ENCODE measurements at regions of chr16 and their contacts with region 1.

Region 1: GRCh38 chr16:1261131-1261892 is 5.4 kb downstream of the TPSD1 start:
- DNase-seq: no peak
- ATAC-seq: no peak
- H3K4me3 ChIP-seq: no peak overlapping the region
- H3K27ac ChIP-seq: no peak overlapping the region
- H3K4me1 ChIP-seq: no peaks in the 10 kb centered on the region
- H3K27me3 ChIP-seq: no peaks in the 10 kb centered on the region

Region 2: GRCh38 chr16:1216296-1216619 is 45.1 kb before region 1 on chr16:
- intact Hi-C with region 1: loop called in 1 of 2 experiments (anchors 10 kb)
- DNase-seq: no peak
- ATAC-seq: no peak
- H3K4me3 ChIP-seq: no peak overlapping the region
- H3K27ac ChIP-seq: no peak overlapping the region
- H3K4me1 ChIP-seq: no peaks in the 10 kb centered on the region
- H3K27me3 ChIP-seq: no peaks in the 10 kb centered on the region

Region 3: DNA sequence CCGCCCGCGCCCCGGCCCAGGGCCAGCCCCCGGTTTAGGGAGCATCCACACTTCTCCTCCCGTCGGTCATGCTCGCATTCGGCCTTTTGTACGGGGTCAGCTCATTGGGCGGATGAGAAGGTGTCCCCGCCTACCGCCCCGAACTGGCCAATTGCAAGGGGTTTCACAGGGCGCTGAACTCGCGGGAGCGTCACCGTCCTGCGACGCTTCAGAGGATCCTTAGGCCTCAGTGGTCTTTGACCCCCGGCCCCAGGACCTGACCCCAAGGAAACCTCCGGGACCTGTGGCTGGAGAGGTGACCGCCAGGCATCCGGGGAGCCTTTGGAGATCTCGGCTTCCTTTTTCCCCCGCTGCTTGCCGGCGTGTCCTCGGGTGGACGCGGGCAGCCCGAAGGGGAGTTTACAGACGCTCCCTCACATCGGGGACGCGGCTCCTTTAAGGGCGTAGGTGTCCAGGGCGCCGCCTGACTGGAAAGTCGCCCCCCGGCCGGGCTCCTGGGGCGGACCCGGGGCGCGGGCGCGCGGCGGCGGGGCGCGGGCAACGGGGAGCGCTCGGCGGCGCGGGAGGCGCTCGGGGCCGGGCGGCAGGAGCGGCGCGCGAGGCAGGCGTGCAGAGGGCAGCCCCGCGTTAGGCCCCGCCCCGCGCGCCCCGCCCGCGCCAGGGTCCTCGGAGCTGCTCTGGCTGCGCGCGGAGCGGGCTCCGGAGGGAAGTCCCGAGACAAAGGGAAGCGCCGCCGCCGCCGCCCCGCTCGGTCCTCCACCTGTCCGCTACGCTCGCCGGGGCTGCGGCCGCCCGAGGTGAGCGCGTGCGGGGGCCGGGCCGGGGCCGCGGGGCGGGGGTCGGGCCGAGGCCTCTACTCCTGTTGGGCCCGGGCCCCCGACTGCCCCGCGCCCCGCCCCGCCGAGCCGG is 47.9 kb after region 1 on chr16 and contains the start of gene UBE2I:
- intact Hi-C with region 1: no loop called
- DNase-seq: peak; percentile 97 to 99
- ATAC-seq: peak; percentile 96
- H3K4me3 ChIP-seq: peak within 1 kb of the TSS; percentile 89 to 94
- H3K27ac ChIP-seq: peak within 1 kb of the TSS; percentile 51 to 97
- H3K4me1 ChIP-seq: peaks cover 0 to 2% of the 10 kb centered on the region in 2 donors
- H3K27me3 ChIP-seq: no peaks in the 10 kb centered on the region
- total RNA-seq, gene UBE2I: 81.7 to 86.7 TPM

Region 4: GRCh38 chr16:1481906-1482835 is 220.9 kb after region 1 on chr16:
- intact Hi-C with region 1: no loop called
- DNase-seq: no peak
- ATAC-seq: no peak
- H3K4me3 ChIP-seq: no peak overlapping the region
- H3K27ac ChIP-seq: no peak overlapping the region
- H3K4me1 ChIP-seq: no peaks in the 10 kb centered on the region
- H3K27me3 ChIP-seq: no peaks in the 10 kb centered on the region

Measured in aorta (tissue), 5 donors.